ENCODE measurements at regions of chr12 and their contacts with region 1.

Region 1: GRCh38 chr12:4276524-4277204 is 3.1 kb downstream of the CCND2 start:
- DNase-seq: peak; percentile 95
- H3K4me3 Mint-ChIP-seq: peak overlapping the region; percentile 97
- H3K27ac Mint-ChIP-seq: peak overlapping the region; percentile 88
- H3K4me1 Mint-ChIP-seq: peaks cover 56% of the 10 kb centered on the region
- H3K27me3 Mint-ChIP-seq: no peaks in the 10 kb centered on the region

Region 2: DNA sequence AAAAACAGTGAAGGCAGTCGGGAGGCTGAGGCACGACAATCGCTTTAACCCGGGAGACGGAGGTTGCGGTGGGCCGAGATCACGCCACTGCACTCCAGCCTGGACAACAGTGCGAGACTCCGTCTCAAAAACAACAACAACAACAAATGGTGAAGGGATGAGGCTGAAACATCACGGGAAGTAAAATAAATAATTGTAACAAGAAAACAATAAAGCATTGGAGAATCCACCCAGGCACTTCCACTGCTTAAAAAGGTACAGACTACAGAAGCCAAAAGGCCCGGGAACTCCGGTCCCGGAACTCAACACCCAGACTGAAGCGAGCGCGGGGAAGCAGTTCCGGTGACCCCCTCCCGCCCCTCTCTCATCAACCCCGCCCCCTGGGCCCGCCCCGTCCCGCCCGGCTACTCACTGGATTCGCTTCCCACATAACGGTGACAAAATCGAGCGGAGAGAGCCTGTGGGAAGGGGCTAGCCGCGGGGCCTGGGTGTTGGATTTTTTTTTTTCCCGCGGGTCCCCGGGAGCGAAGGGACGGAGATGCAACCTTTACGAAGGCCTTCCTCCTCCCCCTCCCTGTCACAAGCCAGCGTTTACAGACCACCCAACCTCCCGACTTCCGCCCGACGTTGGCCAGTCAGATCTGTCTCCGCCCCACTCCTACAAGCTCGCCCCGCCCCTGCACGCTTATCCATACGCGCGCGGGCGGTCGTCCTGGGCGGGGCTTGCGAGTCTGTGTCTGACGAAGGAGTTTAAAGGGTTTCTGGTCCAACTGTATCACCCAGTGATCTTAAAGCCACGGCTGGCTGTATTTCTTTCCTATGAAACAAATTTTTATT is 403.6 kb before region 1 on chr12 and contains the start of gene PARP11:
- intact Hi-C with region 1: loop called (anchors 1 kb)
- DNase-seq: peak; percentile 100
- H3K4me3 Mint-ChIP-seq: peak within 1 kb of the TSS; percentile 92
- H3K27ac Mint-ChIP-seq: peak within 1 kb of the TSS; percentile 90
- H3K4me1 Mint-ChIP-seq: peaks cover 44% of the 10 kb centered on the region
- H3K27me3 Mint-ChIP-seq: no peaks in the 10 kb centered on the region
- total RNA-seq, gene PARP11: 11.4 and 14.8 TPM in 2 replicates

Region 3: GRCh38 chr12:3973978-3974644 is 302.6 kb before region 1 on chr12:
- intact Hi-C with region 1: loop called (anchors 1 kb)
- DNase-seq: peak; percentile 68
- H3K4me3 Mint-ChIP-seq: peak overlapping the region; percentile 68
- H3K27ac Mint-ChIP-seq: peak overlapping the region; percentile 84
- H3K4me1 Mint-ChIP-seq: peaks cover 49% of the 10 kb centered on the region
- H3K27me3 Mint-ChIP-seq: no peaks in the 10 kb centered on the region

Region 4: GRCh38 chr12:4107436-4107878 is 169.2 kb before region 1 on chr12:
- intact Hi-C with region 1: loop called (anchors 1 kb)
- DNase-seq: peak; percentile 93
- H3K4me3 Mint-ChIP-seq: peak overlapping the region; percentile 47
- H3K27ac Mint-ChIP-seq: peak overlapping the region; percentile 83
- H3K4me1 Mint-ChIP-seq: peaks cover 42% of the 10 kb centered on the region
- H3K27me3 Mint-ChIP-seq: peaks cover 2% of the 10 kb centered on the region

Region 5: DNA sequence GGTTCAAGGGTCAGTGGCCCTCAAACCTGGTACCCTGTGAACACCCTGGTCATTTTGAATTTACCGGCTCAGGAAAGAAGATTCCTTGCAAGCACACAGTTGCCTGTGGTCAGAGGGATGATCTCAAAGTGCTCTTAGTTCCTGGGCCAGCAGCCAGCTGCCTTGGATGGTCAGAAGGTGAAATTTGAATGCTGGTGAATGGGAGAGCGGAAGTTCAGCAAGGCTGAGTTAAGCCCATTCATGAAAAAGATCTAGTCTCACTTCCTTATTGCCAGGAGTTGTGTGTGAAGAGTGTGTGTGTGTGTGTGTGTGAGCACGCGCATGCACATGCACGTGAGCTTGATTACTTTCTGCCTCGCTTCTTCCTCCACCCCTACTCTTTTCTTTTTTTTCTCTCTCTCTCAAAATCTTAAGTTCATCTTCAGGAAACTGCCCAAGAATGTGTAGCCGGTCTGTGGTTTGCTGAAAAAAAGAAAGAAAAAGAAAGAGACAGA is 158.6 kb before region 1 on chr12:
- intact Hi-C with region 1: loop called (anchors 1 kb)
- DNase-seq: no peak
- H3K4me3 Mint-ChIP-seq: peak overlapping the region; percentile 73
- H3K27ac Mint-ChIP-seq: peak overlapping the region; percentile 89
- H3K4me1 Mint-ChIP-seq: peaks cover 60% of the 10 kb centered on the region
- H3K27me3 Mint-ChIP-seq: no peaks in the 10 kb centered on the region

Region 6: GRCh38 chr12:4320853-4321701 is 44.4 kb after region 1 on chr12 and contains the start of gene TIGAR:
- intact Hi-C with region 1: loop called (anchors 2 kb)
- DNase-seq: peak; percentile 98
- H3K4me3 Mint-ChIP-seq: peak within 1 kb of the TSS; percentile 90
- H3K27ac Mint-ChIP-seq: peak within 1 kb of the TSS; percentile 92
- H3K4me1 Mint-ChIP-seq: peaks cover 33% of the 10 kb centered on the region
- H3K27me3 Mint-ChIP-seq: no peaks in the 10 kb centered on the region
- total RNA-seq, gene TIGAR: 13.4 TPM in 2 replicates

Measured in activated CD4-positive, alpha-beta T cell treated with anti-CD3 and anti-CD28 coated beads, Interleukin-2, amount 10 ng/mL, durations not matched to agents 24 days and 14 days (primary cell).